Activated CD8-positive, alpha-beta memory T cell treated with anti-CD3 and anti-CD28 coated beads, Interleukin-2, amount 10 ng/mL, durations not matched to agents 7 days and 5 days (primary cell): ENCODE measurements at regions of chr5 and their contacts with region 1.

Region 1: DNA sequence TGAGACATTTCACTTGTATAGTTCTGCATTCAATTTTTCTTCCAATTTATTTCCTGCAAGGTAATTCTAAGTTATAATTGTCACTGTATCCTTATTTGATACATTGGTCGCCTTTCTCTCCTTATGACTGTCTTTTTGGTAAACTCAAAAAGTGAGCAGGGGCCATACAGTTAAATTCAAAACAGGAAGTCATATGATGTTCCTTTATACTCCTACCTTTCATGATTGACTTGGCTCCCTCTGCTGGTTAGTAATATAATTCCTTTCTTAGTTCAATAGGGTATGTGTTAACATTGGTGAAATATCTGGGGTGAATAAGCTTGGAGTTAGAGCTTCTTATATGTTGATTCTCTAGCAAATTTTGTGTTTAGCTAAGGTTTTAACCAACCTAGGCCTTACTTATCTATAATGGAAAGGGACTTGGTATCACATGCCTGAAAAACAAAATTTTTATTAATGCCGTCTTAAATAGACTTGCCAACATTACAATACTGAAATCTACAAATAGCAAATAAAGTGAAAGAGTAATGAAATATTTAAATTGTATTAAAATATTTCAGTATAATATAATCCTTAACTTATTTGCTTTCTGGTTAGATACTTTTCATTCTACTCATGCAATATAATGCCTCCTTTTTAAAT is 6.0 kb upstream of the NIPBL start:
- DNase-seq: no peak
- ATAC-seq: peak; percentile 84
- H3K4me3 Mint-ChIP-seq: no peak overlapping the region
- H3K27ac Mint-ChIP-seq: peak overlapping the region; percentile 58
- H3K4me1 Mint-ChIP-seq: peaks cover 31% of the 10 kb centered on the region
- H3K27me3 Mint-ChIP-seq: no peaks in the 10 kb centered on the region

Region 2: DNA sequence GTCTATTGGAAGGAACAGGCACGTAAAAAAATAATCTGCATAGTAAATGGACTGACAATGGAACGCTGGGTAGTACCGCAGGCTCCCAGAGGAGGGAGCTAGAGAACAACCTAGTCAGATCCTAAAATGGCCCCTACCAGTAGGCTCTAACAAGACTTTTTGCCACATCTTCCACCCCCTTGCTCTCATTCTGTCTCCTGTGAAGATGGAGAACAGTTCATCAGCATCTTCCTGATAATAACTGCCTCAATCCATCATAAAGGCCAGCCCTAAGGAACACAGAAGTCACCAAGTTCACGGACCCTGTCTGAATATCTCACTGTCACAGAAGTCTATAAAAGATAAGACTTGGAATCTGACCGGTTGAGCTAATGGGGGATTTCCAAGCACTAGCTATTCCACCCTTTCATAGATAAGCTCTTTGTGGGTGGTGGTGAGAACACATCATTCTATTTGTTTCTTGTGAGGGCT is 130.7 kb before region 1 on chr5:
- CTCF ChIA-PET with region 1: interaction called, 32 read pairs
- DNase-seq: peak; percentile 80
- ATAC-seq: peak; percentile 77
- H3K4me3 Mint-ChIP-seq: no peak overlapping the region
- H3K27ac Mint-ChIP-seq: no peak overlapping the region
- H3K4me1 Mint-ChIP-seq: peaks cover 3% of the 10 kb centered on the region
- H3K27me3 Mint-ChIP-seq: peaks cover 36% of the 10 kb centered on the region